Gastrocnemius medialis (tissue), 4 donors: ENCODE measurements at regions of chr14 and their contacts with region 1.

Region 1: DNA sequence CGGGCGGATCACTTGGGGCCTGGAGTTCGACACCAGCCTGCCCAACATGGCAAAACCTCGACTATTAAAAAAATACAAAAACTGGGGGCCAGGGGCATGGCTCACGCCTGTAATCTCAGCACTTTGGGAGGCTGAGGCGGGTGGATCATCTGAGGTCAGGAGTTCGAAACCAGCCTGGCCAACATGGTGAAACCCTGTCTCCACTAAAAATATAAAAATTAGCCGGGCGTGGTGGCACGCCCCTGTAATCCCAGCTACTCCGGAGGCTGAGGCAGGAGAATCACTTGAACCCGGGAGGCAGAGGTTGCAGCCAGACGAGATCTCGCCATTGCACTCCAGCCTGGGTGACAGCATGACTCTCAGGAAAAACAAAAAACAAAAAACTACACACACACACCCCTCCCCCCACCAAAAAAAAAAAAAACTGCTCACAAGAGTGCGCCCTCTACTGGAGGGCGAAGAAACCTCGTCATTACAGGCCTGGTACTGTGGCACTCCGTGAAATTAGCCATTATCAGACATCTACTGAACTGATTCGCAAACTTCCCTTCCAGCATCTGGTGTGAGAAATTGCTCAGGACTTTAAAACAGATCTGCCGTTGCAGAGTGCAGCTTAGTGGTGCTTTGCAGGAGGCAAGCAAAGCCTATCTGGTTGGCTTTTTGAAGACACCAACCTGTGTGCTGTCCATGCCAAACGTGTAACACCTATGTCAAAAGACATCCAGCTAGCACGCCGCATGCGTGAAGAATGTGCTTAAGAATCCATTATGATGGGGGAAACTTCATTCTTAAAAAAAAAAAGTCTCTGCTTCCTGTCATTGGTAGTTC is 7.7 kb downstream of the PPP1R3E start:
- DNase-seq: no peak
- ATAC-seq: peak; percentile 76 to 82
- H3K4me3 ChIP-seq: no peak overlapping the region
- H3K27ac ChIP-seq: peak overlapping the region in 2 of 4 donors; percentile 26 to 34
- H3K4me1 ChIP-seq: peaks cover 14 to 16% of the 10 kb centered on the region in 2 donors
- H3K27me3 ChIP-seq: no peaks in the 10 kb centered on the region
- CTCF ChIP-seq: peak; percentile 53 to 88 (median 69)
- POLR2A ChIP-seq: no peak

Region 2: DNA sequence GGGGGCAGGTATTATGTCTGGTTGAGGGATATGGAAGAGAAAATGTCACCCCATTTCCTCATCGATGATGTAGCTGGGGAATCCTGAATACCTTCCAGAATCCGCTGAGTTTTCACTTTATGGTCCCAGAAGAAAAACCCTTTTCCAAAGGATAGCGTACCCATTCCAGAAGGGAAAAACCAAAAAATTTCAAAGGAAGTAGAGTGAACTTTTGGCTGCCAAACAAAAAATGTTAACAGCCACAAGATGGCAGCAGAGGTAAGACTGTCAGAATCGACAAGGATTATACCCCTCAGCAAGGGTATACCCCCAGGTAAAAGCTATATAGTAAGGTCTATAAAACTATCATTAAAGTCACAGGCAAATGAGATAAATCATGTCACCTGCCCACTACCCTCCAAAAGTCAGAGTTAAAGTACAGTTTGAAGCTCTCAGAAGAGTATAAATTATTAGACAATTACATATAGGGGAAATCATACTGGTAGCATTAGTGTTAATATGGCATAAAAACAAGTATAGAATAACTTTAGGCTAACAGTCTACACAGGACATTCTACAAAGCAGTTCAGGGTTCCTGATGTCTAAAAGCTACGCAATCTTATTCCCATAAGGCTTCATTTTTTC is 218.1 kb before region 1 on chr14:
- in situ Hi-C with region 1: no loop called
- intact Hi-C with region 1: loop called (anchors 5 kb)
- DNase-seq: no peak
- ATAC-seq: peak in 1 of 2 donors; percentile 31
- H3K4me3 ChIP-seq: no peak overlapping the region
- H3K27ac ChIP-seq: peak overlapping the region; percentile 71 to 87 (median 84)
- H3K4me1 ChIP-seq: peaks cover 11 to 33% of the 10 kb centered on the region in 2 donors
- H3K27me3 ChIP-seq: no peaks in the 10 kb centered on the region
- CTCF ChIP-seq: peak; percentile 29 to 70 (median 48)
- POLR2A ChIP-seq: no peak

Region 3: GRCh38 chr14:23148591-23149249 is 146.2 kb before region 1 on chr14:
- in situ Hi-C with region 1: no loop called
- intact Hi-C with region 1: no loop called
- DNase-seq: no peak
- ATAC-seq: no peak
- H3K4me3 ChIP-seq: no peak overlapping the region
- H3K27ac ChIP-seq: peak overlapping the region; percentile 90 to 97 (median 96)
- H3K4me1 ChIP-seq: peaks cover 89 to 90% of the 10 kb centered on the region in 2 donors
- H3K27me3 ChIP-seq: no peaks in the 10 kb centered on the region
- CTCF ChIP-seq: no peak
- POLR2A ChIP-seq: no peak

Region 4: GRCh38 chr14:23237772-23238594 is 57.0 kb before region 1 on chr14 and contains the start of gene RNF212B:
- in situ Hi-C with region 1: no loop called
- intact Hi-C with region 1: no loop called
- DNase-seq: peak; percentile 66 to 80
- ATAC-seq: peak; percentile 87 to 93
- H3K4me3 ChIP-seq: peak within 1 kb of the TSS; percentile 31 to 50 (median 38)
- H3K27ac ChIP-seq: no peak within 1 kb of the TSS
- H3K4me1 ChIP-seq: peaks cover 0 to 6% of the 10 kb centered on the region in 2 donors
- H3K27me3 ChIP-seq: peaks cover 5 to 11% (median 9%) of the 10 kb centered on the region in 3 donors
- CTCF ChIP-seq: no peak
- POLR2A ChIP-seq: no peak
- total RNA-seq, gene RNF212B: not detected

Region 5: GRCh38 chr14:23457587-23458445 is 162.9 kb after region 1 on chr14:
- in situ Hi-C with region 1: no loop called
- intact Hi-C with region 1: no loop called
- DNase-seq: no peak
- ATAC-seq: no peak
- H3K4me3 ChIP-seq: no peak overlapping the region
- H3K27ac ChIP-seq: no peak overlapping the region
- H3K4me1 ChIP-seq: no peaks in the 10 kb centered on the region
- H3K27me3 ChIP-seq: no peaks in the 10 kb centered on the region
- CTCF ChIP-seq: no peak
- POLR2A ChIP-seq: no peak